Tibial artery (tissue), 4 donors: ENCODE measurements at regions of chr3 and their contacts with region 1.

Region 1: GRCh38 chr3:158086776-158087175 is 19.4 kb downstream of the SHOX2 start:
- DNase-seq: no peak
- H3K4me3 ChIP-seq: no peak overlapping the region
- H3K27ac ChIP-seq: no peak overlapping the region
- H3K4me1 ChIP-seq: no peaks in the 10 kb centered on the region
- H3K27me3 ChIP-seq: no peaks in the 10 kb centered on the region
- CTCF ChIP-seq: no peak

Region 2: DNA sequence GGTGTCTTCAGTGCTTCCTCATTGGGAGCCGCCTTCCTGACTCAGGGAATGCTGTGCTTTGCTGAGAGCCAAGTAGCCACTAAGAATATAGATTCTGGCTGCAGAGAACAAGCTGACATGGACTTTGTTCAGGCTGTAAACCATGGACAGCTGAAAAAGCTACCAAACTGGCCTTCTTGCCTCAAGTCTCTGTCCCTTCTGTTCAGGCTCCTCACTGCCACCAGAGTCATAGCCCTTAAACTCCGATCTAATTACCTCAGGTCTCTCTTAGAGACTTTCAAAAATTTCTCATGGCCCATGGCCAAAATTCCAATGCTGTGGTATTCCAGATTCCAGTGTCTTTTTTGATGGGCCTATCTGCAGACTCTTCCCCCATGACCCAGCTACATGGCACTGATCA is 669.5 kb before region 1 on chr3:
- intact Hi-C with region 1: no loop called
- DNase-seq: no peak
- H3K4me3 ChIP-seq: no peak overlapping the region
- H3K27ac ChIP-seq: no peak overlapping the region
- H3K4me1 ChIP-seq: no peaks in the 10 kb centered on the region
- H3K27me3 ChIP-seq: no peaks in the 10 kb centered on the region
- CTCF ChIP-seq: no peak

Region 3: DNA sequence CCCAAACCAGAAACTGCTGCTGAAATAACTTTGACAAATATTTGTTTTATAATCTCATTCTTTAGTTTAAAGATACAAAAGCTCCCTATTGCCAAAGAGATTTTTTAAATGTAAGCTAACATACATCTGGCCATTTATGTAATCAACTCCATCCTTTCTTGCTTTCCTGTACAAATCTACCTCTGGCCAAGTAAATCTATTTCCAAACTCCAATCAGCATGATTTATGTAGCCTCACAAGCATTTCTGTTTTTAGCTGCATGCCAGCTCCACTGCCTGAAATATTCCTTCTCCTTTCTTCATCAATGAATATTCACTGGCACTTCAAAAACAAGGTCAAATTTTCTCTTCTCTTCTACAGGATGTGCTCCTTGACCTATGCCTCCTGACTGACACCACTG is 60.5 kb before region 1 on chr3:
- intact Hi-C with region 1: no loop called
- DNase-seq: no peak
- H3K4me3 ChIP-seq: no peak overlapping the region
- H3K27ac ChIP-seq: no peak overlapping the region
- H3K4me1 ChIP-seq: no peaks in the 10 kb centered on the region
- H3K27me3 ChIP-seq: no peaks in the 10 kb centered on the region
- CTCF ChIP-seq: no peak

Region 4: GRCh38 chr3:158111861-158112260 is 25.1 kb after region 1 on chr3:
- intact Hi-C with region 1: loop called (anchors 1 kb)
- DNase-seq: no peak
- H3K4me3 ChIP-seq: no peak overlapping the region
- H3K27ac ChIP-seq: no peak overlapping the region
- H3K4me1 ChIP-seq: peaks cover 0 to 35% (median 11%) of the 10 kb centered on the region in 4 donors
- H3K27me3 ChIP-seq: no peaks in the 10 kb centered on the region
- CTCF ChIP-seq: no peak